ENCODE measurements at regions of chr9 and their contacts with region 1.

Region 1: DNA sequence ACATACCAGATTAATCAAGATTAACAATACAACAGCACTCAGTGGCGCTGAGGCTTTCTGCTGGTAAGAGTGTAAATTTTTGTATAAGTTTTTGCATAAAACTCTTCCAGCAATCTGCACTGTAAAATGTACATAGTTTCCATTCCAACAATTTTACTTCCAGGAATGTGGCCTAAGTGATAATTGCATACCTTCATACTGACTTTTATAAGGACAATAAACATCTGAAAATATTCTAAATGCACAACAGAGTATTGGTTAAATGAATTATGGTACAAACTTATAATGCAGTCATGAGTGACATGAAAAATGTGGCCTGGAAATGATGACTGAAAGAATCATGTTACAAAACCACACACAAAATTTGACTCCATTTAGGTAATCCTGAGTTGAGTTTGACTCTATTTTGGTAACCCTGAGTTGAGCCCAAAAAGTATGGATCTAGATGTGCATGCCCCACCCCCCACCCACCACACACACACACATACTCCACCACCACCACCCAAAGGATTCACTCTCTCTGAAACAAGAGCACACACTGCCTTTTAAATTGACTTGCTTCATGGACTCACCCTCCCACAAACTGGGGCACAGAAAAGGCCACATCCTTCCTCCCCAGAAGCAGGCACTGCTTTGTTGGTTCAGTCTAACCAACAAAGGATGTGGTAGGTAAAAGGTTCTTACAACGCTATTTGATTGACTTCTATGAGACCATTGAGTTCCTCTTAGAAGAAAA is 137.6 kb downstream of the SUSD1 start:
- DNase-seq: peak; percentile 86
- H3K4me3 Mint-ChIP-seq: peak overlapping the region; percentile 37
- H3K27ac Mint-ChIP-seq: peak overlapping the region; percentile 81
- H3K4me1 Mint-ChIP-seq: peaks cover 49% of the 10 kb centered on the region
- H3K27me3 Mint-ChIP-seq: peaks cover 18% of the 10 kb centered on the region

Region 2: GRCh38 chr9:110599164-110599867 is 1438.1 kb before region 1 on chr9:
- CTCF ChIA-PET with region 1: no interaction called
- POLR2A ChIA-PET with region 1: no interaction called
- intact Hi-C with region 1: no loop called
- DNase-seq: no peak
- H3K4me3 Mint-ChIP-seq: no peak overlapping the region
- H3K27ac Mint-ChIP-seq: no peak overlapping the region
- H3K4me1 Mint-ChIP-seq: no peaks in the 10 kb centered on the region
- H3K27me3 Mint-ChIP-seq: no peaks in the 10 kb centered on the region

Region 3: GRCh38 chr9:111937781-111938426 is 99.5 kb before region 1 on chr9:
- CTCF ChIA-PET with region 1: no interaction called
- POLR2A ChIA-PET with region 1: interaction called, 4 read pairs
- intact Hi-C with region 1: loop called (anchors 1 kb)
- DNase-seq: peak; percentile 88
- H3K4me3 Mint-ChIP-seq: peak overlapping the region; percentile 53
- H3K27ac Mint-ChIP-seq: peak overlapping the region; percentile 83
- H3K4me1 Mint-ChIP-seq: peaks cover 23% of the 10 kb centered on the region
- H3K27me3 Mint-ChIP-seq: no peaks in the 10 kb centered on the region

Region 4: GRCh38 chr9:111992523-111992922 is 44.9 kb before region 1 on chr9:
- CTCF ChIA-PET with region 1: no interaction called
- POLR2A ChIA-PET with region 1: interaction called, 4 read pairs
- intact Hi-C with region 1: loop called (anchors 1 kb)
- DNase-seq: peak; percentile 45
- H3K4me3 Mint-ChIP-seq: no peak overlapping the region
- H3K27ac Mint-ChIP-seq: peak overlapping the region; percentile 18
- H3K4me1 Mint-ChIP-seq: peaks cover 34% of the 10 kb centered on the region
- H3K27me3 Mint-ChIP-seq: peaks cover 2% of the 10 kb centered on the region

Region 5: DNA sequence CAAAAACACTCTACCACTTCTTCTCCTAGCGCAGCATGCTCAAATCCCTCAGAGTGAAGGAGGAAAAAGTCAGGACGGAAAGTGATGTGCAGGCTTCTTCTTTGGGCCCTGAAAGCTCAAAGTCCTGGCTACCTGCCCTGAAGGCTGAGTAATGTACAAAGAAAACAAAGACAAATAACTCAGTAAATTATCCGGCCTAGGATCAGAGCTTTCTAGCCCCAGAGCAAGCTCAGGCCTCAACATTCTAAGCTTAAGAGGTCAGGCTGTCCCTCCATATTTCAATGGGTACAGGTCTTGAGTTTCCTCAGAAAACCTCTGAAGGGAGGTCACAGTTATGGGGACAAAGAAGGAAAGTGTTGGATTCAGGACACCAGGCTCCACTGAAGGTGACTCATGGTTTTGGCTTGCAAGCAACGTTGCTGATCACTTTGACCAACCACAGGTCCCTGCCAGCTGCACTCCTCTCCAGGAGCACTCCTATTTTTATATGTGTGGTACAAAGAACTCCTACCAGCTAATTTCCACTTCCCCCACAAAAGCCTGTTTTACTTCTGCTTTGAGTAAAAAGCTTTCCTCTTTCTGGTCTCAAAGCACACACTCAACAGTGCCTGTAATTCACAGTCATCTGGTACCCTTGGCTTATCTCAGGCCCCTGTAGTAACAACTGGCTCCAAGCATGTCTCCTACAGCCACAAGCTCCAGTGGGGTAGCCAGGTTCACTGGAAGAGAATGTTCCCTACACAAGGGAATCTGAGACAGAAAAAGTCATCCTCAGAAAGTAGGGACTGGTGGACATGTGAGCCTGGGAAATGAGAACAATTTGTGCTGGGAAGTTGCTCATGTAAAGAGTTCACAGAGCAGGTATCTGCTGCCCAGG is 25.2 kb before region 1 on chr9:
- CTCF ChIA-PET with region 1: interaction called, 7 read pairs
- POLR2A ChIA-PET with region 1: interaction called, 3 read pairs
- intact Hi-C with region 1: loop called (anchors 2 kb)
- DNase-seq: peak; percentile 49
- H3K4me3 Mint-ChIP-seq: no peak overlapping the region
- H3K27ac Mint-ChIP-seq: no peak overlapping the region
- H3K4me1 Mint-ChIP-seq: peaks cover 31% of the 10 kb centered on the region
- H3K27me3 Mint-ChIP-seq: peaks cover 25% of the 10 kb centered on the region

Region 6: DNA sequence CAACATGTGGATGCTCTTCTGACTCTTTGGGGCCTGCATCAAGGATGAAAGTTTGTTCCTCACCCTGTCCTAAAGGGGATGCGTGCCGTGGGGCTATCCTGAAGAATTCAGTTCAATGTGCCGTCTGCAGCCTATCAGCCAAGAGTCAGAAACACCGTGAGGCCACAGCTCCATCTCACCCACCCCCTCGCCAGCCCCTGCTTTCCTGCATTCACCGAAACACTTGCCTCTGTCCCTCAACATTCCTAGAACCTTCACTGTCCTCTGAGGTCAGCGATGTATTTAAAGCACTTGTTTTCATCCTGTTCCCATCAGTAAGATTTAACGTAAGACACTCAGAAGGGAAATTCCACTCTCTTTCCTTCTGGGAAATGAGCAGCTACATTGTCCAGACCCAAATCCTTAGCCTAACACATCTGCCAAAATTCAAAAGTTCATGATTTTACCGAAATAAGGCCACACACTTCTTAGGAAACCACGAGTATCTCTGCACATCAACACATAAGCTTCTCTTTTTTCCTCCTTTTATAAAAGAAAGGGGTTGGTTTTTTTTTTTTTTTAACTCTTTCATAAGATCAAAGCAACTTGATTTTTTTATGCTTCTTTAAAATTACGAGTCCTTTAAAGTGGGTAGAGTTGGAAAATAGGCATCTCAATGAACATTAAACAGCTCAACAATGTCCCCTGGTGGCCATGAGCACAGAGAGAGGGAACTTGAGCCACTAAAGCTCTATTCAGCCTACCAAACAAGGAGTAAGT is 37.0 kb after region 1 on chr9:
- CTCF ChIA-PET with region 1: interaction called, 5 read pairs
- POLR2A ChIA-PET with region 1: no interaction called
- intact Hi-C with region 1: loop called (anchors 2 kb)
- DNase-seq: peak; percentile 71
- H3K4me3 Mint-ChIP-seq: peak overlapping the region; percentile 5
- H3K27ac Mint-ChIP-seq: peak overlapping the region; percentile 3
- H3K4me1 Mint-ChIP-seq: peaks cover 32% of the 10 kb centered on the region
- H3K27me3 Mint-ChIP-seq: peaks cover 1% of the 10 kb centered on the region